PC-3 (cell line): ENCODE measurements at regions of chr13 and their contacts with region 1.

Region 1: GRCh38 chr13:44930963-44931623 is 58.2 kb downstream of the NUFIP1 start:
- DNase-seq: peak; percentile 27
- ATAC-seq: no peak
- H3K4me3 ChIP-seq: no peak overlapping the region
- H3K27ac ChIP-seq: peak overlapping the region; percentile 97
- H3K4me1 ChIP-seq: peaks cover 51% of the 10 kb centered on the region
- H3K27me3 ChIP-seq: no peaks in the 10 kb centered on the region
- CTCF ChIP-seq: no peak

Region 2: DNA sequence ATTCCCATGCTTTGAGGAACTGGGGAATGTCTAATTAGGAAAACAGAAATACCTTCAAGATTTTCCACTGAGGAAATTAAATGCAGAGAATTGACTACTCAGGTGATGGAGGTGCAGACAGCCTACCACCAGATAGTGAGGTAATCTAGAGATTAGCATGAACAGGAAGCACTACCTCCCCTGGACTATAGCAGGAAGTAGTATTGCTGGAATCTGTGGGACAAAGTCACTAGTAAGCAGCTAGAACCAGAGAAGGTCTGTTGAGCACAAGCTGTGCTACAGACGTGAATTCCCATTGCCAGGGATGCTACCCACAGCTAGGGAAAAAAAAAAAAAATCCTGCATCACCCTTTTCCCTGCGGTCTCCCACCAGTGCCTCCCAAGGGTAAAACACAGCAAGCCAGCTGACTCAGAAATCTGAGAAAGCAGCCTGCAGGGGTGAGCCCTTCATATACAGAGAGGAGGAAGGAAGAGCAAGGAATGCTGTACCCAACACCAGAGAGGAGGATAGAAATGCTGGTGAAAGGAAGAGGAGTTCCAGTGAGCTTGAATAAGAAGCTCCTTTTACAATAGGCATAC is 1154.5 kb before region 1 on chr13:
- CTCF ChIA-PET with region 1: interaction called, 12 read pairs
- POLR2A ChIA-PET with region 1: no interaction called
- intact Hi-C with region 1: no loop called
- DNase-seq: no peak
- ATAC-seq: no peak
- H3K4me3 ChIP-seq: no peak overlapping the region
- H3K27ac ChIP-seq: no peak overlapping the region
- H3K4me1 ChIP-seq: no peaks in the 10 kb centered on the region
- H3K27me3 ChIP-seq: no peaks in the 10 kb centered on the region
- CTCF ChIP-seq: no peak

Region 3: DNA sequence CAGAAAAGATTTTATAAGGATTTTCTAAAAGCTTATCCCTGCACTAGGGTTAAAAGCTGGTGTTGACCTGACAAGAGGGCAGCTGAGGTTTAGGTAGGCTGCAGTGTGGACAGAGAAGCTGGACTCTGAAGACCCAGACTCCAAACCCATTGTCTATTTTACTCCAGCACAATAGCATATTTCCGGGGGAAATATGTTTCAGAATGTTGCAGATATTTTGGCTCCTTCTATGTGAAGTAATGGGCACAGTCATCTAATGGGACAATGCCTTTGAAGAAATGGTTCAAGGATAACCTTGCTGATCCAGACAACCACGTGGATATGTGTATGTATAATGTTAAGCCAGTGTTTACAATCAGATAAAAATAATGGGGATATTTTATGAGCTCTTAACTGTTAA is 181.2 kb before region 1 on chr13:
- CTCF ChIA-PET with region 1: interaction called, 11 read pairs
- POLR2A ChIA-PET with region 1: no interaction called
- intact Hi-C with region 1: no loop called
- DNase-seq: no peak
- ATAC-seq: no peak
- H3K4me3 ChIP-seq: no peak overlapping the region
- H3K27ac ChIP-seq: no peak overlapping the region
- H3K4me1 ChIP-seq: no peaks in the 10 kb centered on the region; the same call in 1 of the 2 replicates
- H3K27me3 ChIP-seq: no peaks in the 10 kb centered on the region
- CTCF ChIP-seq: no peak

Region 4: DNA sequence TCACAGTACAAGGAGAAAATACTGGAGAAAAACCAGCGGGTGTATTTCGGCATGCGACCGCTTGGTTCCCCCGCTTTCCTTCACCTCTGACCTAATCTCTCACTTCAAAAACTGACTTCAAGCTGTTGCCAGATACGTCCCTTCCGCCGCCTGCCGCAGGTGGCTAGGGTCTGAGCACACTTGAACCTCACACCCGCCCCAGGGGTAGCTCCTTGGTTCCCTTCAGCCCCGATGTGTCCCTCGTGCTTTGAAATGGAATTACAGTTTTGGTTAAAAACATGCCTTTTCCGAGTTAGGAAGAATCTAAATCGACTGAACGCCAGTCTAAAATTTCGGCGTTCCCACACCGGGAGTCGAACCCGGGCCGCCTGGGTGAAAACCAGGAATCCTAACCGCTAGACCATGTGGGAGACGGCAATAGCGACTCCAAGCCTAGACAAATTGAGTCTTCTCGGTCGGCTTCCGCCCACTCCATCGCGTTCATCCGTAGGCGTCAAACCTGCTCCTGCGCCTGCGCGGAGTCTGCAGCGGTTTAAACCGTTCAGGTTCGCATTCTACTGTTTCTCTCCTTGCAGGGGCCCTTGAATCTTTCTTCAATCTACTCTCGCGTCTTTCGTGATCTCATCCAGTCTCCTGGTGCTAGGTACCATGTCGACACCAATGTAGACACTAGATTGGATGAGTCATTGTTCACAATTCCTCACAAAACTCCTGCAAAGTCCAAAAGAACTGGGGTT is 13.3 kb before region 1 on chr13:
- CTCF ChIA-PET with region 1: interaction called, 3 read pairs
- POLR2A ChIA-PET with region 1: interaction called, 7 read pairs
- intact Hi-C with region 1: loop called (anchors 2 kb)
- DNase-seq: peak; percentile 92
- ATAC-seq: peak; percentile 52
- H3K4me3 ChIP-seq: peak overlapping the region; percentile 71
- H3K27ac ChIP-seq: peak overlapping the region; percentile 94
- H3K4me1 ChIP-seq: peaks cover 28% of the 10 kb centered on the region
- H3K27me3 ChIP-seq: no peaks in the 10 kb centered on the region
- CTCF ChIP-seq: no peak

Region 5: GRCh38 chr13:44988973-44989817 is 58.1 kb after region 1 on chr13 and contains the starts of genes GPALPP1 and NUFIP1:
- CTCF ChIA-PET with region 1: no interaction called
- POLR2A ChIA-PET with region 1: no interaction called
- intact Hi-C with region 1: no loop called
- DNase-seq: peak; percentile 91
- ATAC-seq: peak; percentile 89
- H3K4me3 ChIP-seq: peak within 1 kb of the TSS; percentile 100
- H3K27ac ChIP-seq: peak within 1 kb of the TSS; percentile 53
- H3K4me1 ChIP-seq: peaks cover 12% of the 10 kb centered on the region
- H3K27me3 ChIP-seq: no peaks in the 10 kb centered on the region
- CTCF ChIP-seq: no peak
- total RNA-seq, gene GPALPP1: 5.0 and 17.0 TPM in 2 replicates
- total RNA-seq, gene NUFIP1: 2.5 and 4.0 TPM in 2 replicates